ENCODE measurements at regions of chr19 and their contacts with region 1.

Region 1: DNA sequence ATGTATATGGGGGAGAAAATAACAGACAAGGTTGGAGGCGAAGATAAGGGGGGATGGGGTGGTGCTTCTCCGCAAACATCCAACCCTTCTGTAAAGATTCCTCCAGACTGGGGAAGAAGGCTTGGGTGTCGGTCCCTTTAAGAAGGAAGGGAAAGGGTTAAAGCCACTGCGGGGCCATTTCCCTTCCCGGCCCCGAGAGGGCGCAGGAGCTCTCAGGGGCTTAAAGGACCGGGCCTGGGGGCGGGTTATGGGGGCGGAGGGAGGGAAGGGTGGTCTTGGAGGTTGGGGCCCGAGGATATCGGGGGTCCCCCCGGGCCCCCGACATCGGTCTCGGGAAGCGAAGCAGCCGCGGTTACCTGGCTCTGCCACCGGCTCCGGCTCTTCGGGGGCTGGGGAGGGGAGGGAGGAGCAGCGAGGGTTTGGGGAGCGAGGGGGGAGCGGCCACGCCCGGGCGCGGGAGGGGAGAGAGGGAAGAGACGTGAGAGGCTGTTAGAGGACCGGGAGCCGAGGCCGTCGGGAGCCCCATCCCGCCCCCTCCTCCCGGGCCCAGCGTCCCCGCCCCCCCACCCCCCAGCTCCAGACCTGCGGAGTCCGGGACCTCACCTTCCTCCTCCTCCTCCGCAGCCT is 2.8 kb downstream of the TNNT1 start:
- ATAC-seq: peak in 5 of 8 experiments; percentile 3 to 40 (median 35)
- H3K4me3 ChIP-seq: peak overlapping the region in 3 of 5 donors; percentile 5 to 23 (median 20)
- H3K27ac ChIP-seq: no peak overlapping the region
- H3K4me1 ChIP-seq: peaks cover 3 to 8% of the 10 kb centered on the region in 2 donors

Region 2: GRCh38 chr19:55407800-55408532 is 261.8 kb after region 1 on chr19:
- in situ Hi-C with region 1: loop called in 5 of 9 experiments (anchors 25 kb)
- ATAC-seq: peak; percentile 87 to 93 (median 92)
- H3K4me3 ChIP-seq: peak overlapping the region; percentile 72 to 91 (median 75)
- H3K27ac ChIP-seq: peak overlapping the region; percentile 97 to 99
- H3K4me1 ChIP-seq: peaks cover 17% of the 10 kb centered on the region in 2 donors

Region 3: DNA sequence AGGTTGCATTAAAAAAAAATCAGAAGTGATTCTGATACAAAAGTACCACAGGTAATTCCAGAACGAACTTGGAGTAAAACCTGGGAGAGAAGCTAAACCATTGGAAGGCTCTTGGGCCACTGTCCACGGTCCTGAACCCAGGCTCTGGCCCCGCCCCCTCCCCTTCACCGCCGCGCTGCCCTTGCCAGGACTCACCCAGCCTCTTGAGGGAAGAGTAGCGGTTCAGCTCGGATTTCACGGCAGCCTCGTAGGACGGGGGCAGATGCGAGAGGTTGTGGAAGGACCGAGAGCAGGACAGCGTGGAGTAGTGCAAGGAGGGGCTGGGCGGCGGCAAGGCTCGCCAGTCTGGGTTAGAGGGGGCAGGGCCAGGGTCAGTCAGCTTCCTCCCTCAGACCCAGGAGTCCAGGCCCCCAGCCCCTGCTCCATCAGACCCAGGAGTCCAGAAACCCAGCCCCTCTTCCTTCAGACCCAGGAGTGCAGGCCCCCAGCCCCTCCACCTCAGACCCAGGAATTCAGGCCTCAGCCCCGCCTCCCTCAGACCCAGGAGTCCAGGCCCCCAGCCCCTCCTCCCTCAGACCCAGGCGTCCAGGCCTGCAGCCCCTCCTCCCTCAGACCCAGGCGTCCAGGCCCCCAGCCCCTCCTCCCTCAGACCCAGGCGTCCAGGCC is 291.4 kb after region 1 on chr19:
- in situ Hi-C with region 1: loop called in 1 of 9 experiments (anchors 25 kb)
- ATAC-seq: peak; percentile 18 to 91 (median 49)
- H3K4me3 ChIP-seq: no peak overlapping the region
- H3K27ac ChIP-seq: no peak overlapping the region
- H3K4me1 ChIP-seq: peaks cover 18 to 20% of the 10 kb centered on the region in 2 donors

Region 4: GRCh38 chr19:55476100-55476775 is 330.0 kb after region 1 on chr19 and contains the start of gene ZNF628:
- in situ Hi-C with region 1: loop called in 1 of 9 experiments (anchors 25 kb)
- ATAC-seq: peak; percentile 88 to 97 (median 95)
- H3K4me3 ChIP-seq: peak within 1 kb of the TSS; percentile 58 to 72 (median 62)
- H3K27ac ChIP-seq: peak within 1 kb of the TSS; percentile 95 to 96
- H3K4me1 ChIP-seq: peaks cover 20 to 24% of the 10 kb centered on the region in 2 donors
- total RNA-seq, gene ZNF628: 1.1 to 5.6 (median 3.6) TPM

Region 5: GRCh38 chr19:55624109-55625003 is 478.2 kb after region 1 on chr19 and contains the start of gene ZNF784:
- in situ Hi-C with region 1: loop called in 3 of 9 experiments (anchors 25 kb)
- ATAC-seq: peak; percentile 84 to 92 (median 88)
- H3K4me3 ChIP-seq: peak within 1 kb of the TSS; percentile 44 to 67 (median 47)
- H3K27ac ChIP-seq: peak within 1 kb of the TSS; percentile 95 to 96
- H3K4me1 ChIP-seq: peaks cover 0 to 5% of the 10 kb centered on the region in 2 donors
- total RNA-seq, gene ZNF784: 1.6 to 8.2 (median 4.1) TPM

Measured in motor neuron (in vitro differentiated cells).